GM18951 (cell line): ENCODE measurements at regions of chr19 and their contacts with region 1.

Region 1: DNA sequence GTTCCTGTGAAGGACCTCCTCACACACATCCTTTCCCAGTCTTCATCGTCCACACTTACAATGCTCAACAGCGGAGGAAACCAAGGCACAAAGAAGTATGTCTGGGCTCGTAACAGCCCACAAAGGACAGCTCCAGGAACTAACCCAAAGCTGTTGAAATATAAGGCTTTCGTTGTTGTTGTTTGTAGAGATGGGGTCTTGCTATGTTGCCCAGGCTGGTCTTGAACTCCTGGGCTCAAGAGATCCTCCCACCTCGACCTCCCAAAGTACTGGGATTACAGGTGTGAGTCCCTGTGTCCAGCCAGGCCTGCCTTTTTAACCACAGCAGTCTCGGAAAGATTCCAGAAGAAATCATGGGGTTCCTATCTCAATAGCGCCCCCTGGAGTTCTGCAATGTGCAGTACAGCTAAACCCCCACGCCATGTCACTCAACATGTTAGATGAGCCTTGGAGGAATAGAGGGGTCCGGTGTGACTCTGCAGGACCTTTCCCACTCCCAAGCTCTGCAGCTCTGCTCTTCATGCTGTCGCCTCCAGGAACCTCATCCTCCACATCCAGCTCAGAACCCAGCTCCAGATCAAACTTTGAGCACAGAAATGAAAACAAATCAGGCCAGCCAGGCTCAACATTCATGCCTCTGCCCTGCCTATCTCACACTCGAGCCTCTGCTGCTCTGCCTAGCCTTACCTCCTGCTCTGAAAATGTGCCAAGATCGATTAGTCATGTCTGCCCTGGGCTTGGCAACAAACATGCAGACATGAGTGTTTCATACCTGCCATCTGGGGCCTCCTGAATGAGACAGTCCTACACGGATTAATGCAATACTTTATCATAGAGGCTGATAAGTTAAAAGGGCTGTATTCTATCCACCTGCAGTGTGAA is 7.5 kb downstream of the PLA2G4C start:
- POLR2A ChIP-seq: no peak

Region 2: DNA sequence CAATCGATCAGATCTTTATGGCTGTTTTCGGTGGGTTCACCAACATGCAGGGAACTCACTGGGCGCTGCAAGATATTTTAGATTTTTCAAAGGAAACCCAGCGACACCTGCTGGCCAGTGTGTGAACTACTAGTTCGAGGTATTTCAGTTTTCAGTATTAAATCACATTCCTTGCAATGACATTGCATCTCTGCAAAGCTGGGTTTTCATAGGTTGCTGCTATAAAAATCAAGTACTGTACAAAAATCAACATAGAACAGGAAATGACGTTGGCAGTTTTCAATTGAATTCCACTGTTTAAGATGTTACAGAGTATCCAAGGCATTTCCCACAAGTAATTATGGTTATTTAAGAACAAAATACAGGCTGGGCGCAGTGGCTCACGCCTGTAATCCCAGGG is 49.4 kb after region 1 on chr19:
- in situ Hi-C with region 1: loop called (anchors 10 kb)
- POLR2A ChIP-seq: no peak

Region 3: DNA sequence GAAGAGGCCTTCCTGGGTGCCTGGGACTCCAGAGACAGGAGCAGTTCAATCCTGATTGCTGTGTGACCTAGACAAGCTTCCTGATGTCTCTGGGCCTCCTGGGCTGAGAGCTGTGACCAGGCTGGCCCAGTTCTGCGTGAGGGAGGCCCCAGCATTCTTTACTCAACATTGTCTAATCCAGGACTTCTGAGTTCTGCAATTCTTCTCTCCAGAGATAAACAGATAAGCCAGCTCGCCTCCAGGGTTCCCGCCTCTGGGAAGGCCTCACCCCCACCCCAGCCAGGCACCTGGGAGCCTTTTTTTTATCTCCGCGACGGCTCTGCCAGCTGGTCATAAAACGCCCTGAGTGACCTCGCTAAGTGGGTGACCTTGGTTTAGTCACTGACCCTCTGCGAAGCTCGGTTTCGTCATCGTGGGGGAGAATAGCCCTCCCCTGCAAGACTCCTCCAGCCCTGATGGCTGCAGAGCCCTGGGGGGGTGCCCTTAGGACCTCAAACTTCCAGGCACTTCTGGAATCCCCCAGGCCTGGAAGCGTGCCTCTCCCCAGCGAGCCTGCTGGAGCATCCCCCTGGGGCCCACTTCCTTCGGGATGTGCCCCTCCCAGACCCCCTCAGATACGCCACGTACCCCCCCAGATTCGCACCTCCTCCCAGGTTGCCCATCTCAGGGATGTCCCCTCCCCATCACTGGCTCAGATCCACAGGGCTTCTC is 450.7 kb after region 1 on chr19:
- in situ Hi-C with region 1: no loop called
- POLR2A ChIP-seq: no peak